SK-N-SH (cell line): ENCODE measurements at regions of chr15 and their contacts with region 1.

Region 1: DNA sequence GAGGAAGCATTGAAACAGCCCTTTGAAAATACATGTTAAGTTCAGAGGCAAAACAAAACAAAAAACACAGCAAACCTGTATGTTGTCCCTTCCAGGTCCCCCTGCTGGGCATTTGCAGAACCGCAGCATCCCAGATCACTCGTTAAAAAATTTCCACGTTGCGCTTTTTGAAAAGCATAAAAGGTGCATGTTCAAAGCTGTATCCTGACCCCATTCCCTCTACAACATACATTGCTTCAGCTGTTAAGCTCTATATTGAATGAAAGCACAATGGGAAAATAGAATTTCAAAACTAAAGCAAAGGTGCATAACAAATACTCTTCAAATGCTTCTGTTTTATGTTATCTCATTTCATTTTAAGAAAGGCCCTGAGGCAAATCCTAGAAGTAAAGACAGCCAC is 328.3 kb downstream of the THSD4 start:
- DNase-seq: peak; percentile 42
- H3K4me3 ChIP-seq: no peak overlapping the region; a peak in 1 of 4 replicates
- H3K27ac ChIP-seq: no peak overlapping the region
- H3K4me1 ChIP-seq: peaks cover 0 to 27% of the 10 kb centered on the region in 2 experiments; a peak in 3 of 4 replicates
- H3K27me3 ChIP-seq: no peaks in the 10 kb centered on the region
- CTCF ChIP-seq: peak; percentile 94
- EP300 ChIP-seq: no peak
- RAD21 ChIP-seq: peak; percentile 57

Region 2: GRCh38 chr15:70826634-70827033 is 616.9 kb before region 1 on chr15:
- CTCF ChIA-PET with region 1: interaction called, 12 read pairs
- POLR2A ChIA-PET with region 1: no interaction called
- DNase-seq: no peak
- H3K4me3 ChIP-seq: no peak overlapping the region
- H3K27ac ChIP-seq: peak overlapping the region in 1 of 2 experiments; percentile 56; a peak in 2 of 4 replicates
- H3K4me1 ChIP-seq: peaks cover 0 to 23% of the 10 kb centered on the region in 2 experiments; a peak in 2 of 4 replicates
- H3K27me3 ChIP-seq: no peaks in the 10 kb centered on the region
- CTCF ChIP-seq: no peak
- EP300 ChIP-seq: no peak
- RAD21 ChIP-seq: no peak

Region 3: GRCh38 chr15:70892002-70892914 is 551.3 kb before region 1 on chr15 and contains the starts of genes LRRC49 and THAP10:
- CTCF ChIA-PET with region 1: interaction called, 12 read pairs
- POLR2A ChIA-PET with region 1: no interaction called
- DNase-seq: peak; percentile 88
- H3K4me3 ChIP-seq: peak within 1 kb of the TSS; percentile 82 to 98
- H3K27ac ChIP-seq: peak within 1 kb of the TSS; percentile 91 to 99
- H3K4me1 ChIP-seq: peaks cover 6 to 13% of the 10 kb centered on the region in 2 experiments; a peak in 3 of 4 replicates
- H3K27me3 ChIP-seq: no peaks in the 10 kb centered on the region
- CTCF ChIP-seq: no peak
- EP300 ChIP-seq: peak in 1 of 2 experiments; percentile 10; a peak in 1 of 4 replicates
- RAD21 ChIP-seq: no peak
- polyA plus RNA-seq, gene LRRC49: 7.2 and 10.4 TPM in 2 replicates
- polyA plus RNA-seq, gene THAP10: 2.9 and 3.2 TPM in 2 replicates

Region 4: GRCh38 chr15:71114896-71115554 is 328.5 kb before region 1 on chr15 and contains the start of gene THSD4:
- CTCF ChIA-PET with region 1: interaction called, 30 read pairs
- POLR2A ChIA-PET with region 1: no interaction called
- DNase-seq: peak; percentile 96
- H3K4me3 ChIP-seq: peak within 1 kb of the TSS; percentile 61 to 87
- H3K27ac ChIP-seq: peak within 1 kb of the TSS; percentile 55 to 78
- H3K4me1 ChIP-seq: peaks cover 0 to 12% of the 10 kb centered on the region in 2 experiments; a peak in 1 of 4 replicates
- H3K27me3 ChIP-seq: no peaks in the 10 kb centered on the region
- CTCF ChIP-seq: peak; percentile 94
- EP300 ChIP-seq: 0 out of 4 replicates have a peak, but pooled peaks of 1 of the 2 experiments have one; percentile 11
- RAD21 ChIP-seq: peak; percentile 73
- polyA plus RNA-seq, gene THSD4: 64.8 and 79.1 TPM in 2 replicates

Region 5: DNA sequence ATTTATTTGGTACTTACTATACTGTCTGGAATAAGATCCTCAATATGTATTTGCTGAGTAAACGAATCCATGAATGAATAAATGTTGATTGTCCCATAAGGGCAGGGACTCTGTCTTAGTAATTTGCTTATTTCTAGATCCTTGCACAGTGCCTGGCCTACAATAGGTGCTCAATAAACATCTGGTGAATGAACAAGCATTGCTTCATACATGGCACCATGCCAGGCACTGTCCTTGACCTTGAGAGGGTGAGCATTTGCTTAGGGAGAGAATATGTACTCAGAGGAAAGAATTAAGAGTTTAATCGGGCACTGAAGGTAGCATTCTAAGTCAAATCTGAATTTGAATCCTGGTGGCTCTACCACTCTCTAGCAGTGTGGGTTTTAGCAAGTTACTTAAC is 46.2 kb before region 1 on chr15:
- CTCF ChIA-PET with region 1: interaction called, 21 read pairs
- POLR2A ChIA-PET with region 1: no interaction called
- DNase-seq: no peak
- H3K4me3 ChIP-seq: no peak overlapping the region
- H3K27ac ChIP-seq: no peak overlapping the region
- H3K4me1 ChIP-seq: no peaks in the 10 kb centered on the region; a peak in 1 of 4 replicates
- H3K27me3 ChIP-seq: no peaks in the 10 kb centered on the region
- CTCF ChIP-seq: no peak
- EP300 ChIP-seq: no peak
- RAD21 ChIP-seq: no peak

Region 6: GRCh38 chr15:71508081-71508682 is 64.6 kb after region 1 on chr15:
- CTCF ChIA-PET with region 1: no interaction called
- POLR2A ChIA-PET with region 1: no interaction called
- DNase-seq: no peak
- H3K4me3 ChIP-seq: no peak overlapping the region
- H3K27ac ChIP-seq: no peak overlapping the region
- H3K4me1 ChIP-seq: no peaks in the 10 kb centered on the region
- H3K27me3 ChIP-seq: no peaks in the 10 kb centered on the region
- CTCF ChIP-seq: no peak
- EP300 ChIP-seq: no peak
- RAD21 ChIP-seq: no peak